Transverse colon (tissue), 4 donors: ENCODE measurements at regions of chr1 and their contacts with region 1.

Region 1: GRCh38 chr1:109532365-109533136 is 7.1 kb upstream of the GPR61 start:
- DNase-seq: peak; percentile 89
- H3K4me3 ChIP-seq: peak overlapping the region in 1 of 4 donors; percentile 20
- H3K27ac ChIP-seq: peak overlapping the region in 3 of 4 donors; percentile 21 to 58 (median 34)
- H3K4me1 ChIP-seq: peaks cover 4 to 25% (median 7%) of the 10 kb centered on the region in 4 donors
- H3K27me3 ChIP-seq: no peaks in the 10 kb centered on the region
- CTCF ChIP-seq: peak; percentile 97 to 99 (median 99)
- EP300 ChIP-seq: no peak
- POLR2A ChIP-seq: no peak

Region 2: GRCh38 chr1:109263597-109264398 is 268.8 kb before region 1 on chr1:
- in situ Hi-C with region 1: loop called in 2 of 4 experiments (anchors 5 to 10 kb)
- intact Hi-C with region 1: no loop called
- DNase-seq: peak; percentile 82
- H3K4me3 ChIP-seq: no peak overlapping the region
- H3K27ac ChIP-seq: no peak overlapping the region
- H3K4me1 ChIP-seq: no peaks in the 10 kb centered on the region
- H3K27me3 ChIP-seq: no peaks in the 10 kb centered on the region
- CTCF ChIP-seq: peak; percentile 91 to 100 (median 96)
- EP300 ChIP-seq: no peak
- POLR2A ChIP-seq: no peak

Region 3: GRCh38 chr1:109397538-109398342 is 134.8 kb before region 1 on chr1 and contains the start of gene SORT1:
- in situ Hi-C with region 1: no loop called
- intact Hi-C with region 1: no loop called
- DNase-seq: peak; percentile 85
- H3K4me3 ChIP-seq: peak within 1 kb of the TSS; percentile 29 to 82 (median 74)
- H3K27ac ChIP-seq: peak within 1 kb of the TSS; percentile 85 to 89 (median 86)
- H3K4me1 ChIP-seq: peaks cover 17 to 54% (median 44%) of the 10 kb centered on the region in 4 donors
- H3K27me3 ChIP-seq: no peaks in the 10 kb centered on the region
- CTCF ChIP-seq: no peak
- EP300 ChIP-seq: no peak
- POLR2A ChIP-seq: peak; percentile 14
- total RNA-seq, gene SORT1: 53.5 to 79.3 (median 66.2) TPM

Region 4: GRCh38 chr1:109485001-109485400 is 47.5 kb before region 1 on chr1:
- in situ Hi-C with region 1: loop called in 1 of 4 experiments (anchors 5 kb)
- intact Hi-C with region 1: no loop called
- DNase-seq: no peak
- H3K4me3 ChIP-seq: no peak overlapping the region
- H3K27ac ChIP-seq: no peak overlapping the region
- H3K4me1 ChIP-seq: peaks cover 8 to 20% (median 13%) of the 10 kb centered on the region in 4 donors
- H3K27me3 ChIP-seq: no peaks in the 10 kb centered on the region
- CTCF ChIP-seq: no peak
- EP300 ChIP-seq: no peak
- POLR2A ChIP-seq: no peak

Region 5: DNA sequence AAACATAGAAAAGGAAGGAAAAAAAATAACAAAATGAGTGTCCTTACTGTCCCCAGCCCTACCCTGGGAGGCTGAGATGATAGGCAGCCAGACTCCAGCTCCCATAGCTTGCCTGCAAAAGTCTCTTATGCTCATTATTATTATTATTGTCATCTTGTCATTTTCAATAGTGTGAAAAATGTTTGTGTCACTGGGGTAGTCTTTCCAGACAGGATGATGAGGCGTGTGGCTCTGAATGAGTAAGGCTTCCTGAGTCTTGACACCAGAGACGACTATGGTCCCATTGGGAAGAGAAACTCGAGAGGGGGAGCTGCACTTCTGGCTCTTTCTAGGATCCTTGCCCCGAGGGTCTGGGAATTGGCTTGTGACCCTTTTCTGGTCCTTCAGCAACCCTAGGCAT is 39.8 kb before region 1 on chr1:
- in situ Hi-C with region 1: loop called in 3 of 4 experiments (anchors 5 kb)
- intact Hi-C with region 1: loop called (anchors 1 kb)
- DNase-seq: no peak
- H3K4me3 ChIP-seq: no peak overlapping the region
- H3K27ac ChIP-seq: no peak overlapping the region
- H3K4me1 ChIP-seq: peaks cover 6 to 21% (median 14%) of the 10 kb centered on the region in 4 donors
- H3K27me3 ChIP-seq: no peaks in the 10 kb centered on the region
- CTCF ChIP-seq: no peak
- EP300 ChIP-seq: no peak
- POLR2A ChIP-seq: no peak

Region 6: DNA sequence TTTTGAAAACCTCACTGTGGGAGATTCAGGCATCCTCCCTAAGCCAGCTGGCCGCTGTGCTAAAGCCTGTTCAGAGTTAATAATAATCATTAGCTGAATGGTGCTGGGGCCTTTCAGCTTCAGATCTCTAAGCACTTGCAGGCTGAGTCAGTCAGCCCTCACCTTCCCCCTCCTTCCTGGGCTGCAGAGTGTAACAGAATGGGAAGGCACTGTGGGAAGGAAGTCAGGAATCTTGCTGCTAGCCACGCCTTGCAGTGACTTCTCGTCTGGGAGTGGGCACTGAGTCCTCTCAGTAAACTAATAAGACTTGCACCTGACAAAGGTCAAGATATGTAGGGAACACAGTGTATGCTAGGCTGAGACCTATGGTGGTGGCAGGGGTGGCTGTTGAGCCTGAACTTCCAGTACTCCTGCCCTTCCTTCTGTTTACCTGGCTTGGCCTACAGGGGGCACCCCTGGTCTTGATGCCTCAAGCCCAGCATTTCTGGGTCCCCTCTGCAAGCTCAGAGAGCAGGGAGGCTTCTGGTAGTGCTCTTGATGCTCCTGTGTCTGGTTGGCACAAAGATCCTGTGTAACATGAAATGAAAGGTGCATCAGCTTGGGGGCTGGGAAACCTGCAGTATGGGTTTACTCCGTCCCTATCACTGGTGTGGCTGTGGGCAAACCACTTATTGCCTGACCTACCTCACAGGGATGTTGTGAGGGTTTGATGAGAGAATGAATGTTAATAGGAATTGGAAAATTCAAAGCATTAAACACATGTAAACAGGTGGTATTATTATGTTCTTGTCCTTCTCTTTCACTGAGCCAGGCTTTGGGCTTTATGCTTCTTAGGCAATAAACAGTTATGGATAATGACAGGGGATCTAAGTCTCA is 32.7 kb before region 1 on chr1:
- in situ Hi-C with region 1: loop called in 2 of 4 experiments (anchors 5 kb)
- intact Hi-C with region 1: loop called (anchors 2 kb)
- DNase-seq: peak; percentile 83
- H3K4me3 ChIP-seq: no peak overlapping the region
- H3K27ac ChIP-seq: peak overlapping the region; percentile 31 to 64 (median 56)
- H3K4me1 ChIP-seq: peaks cover 20 to 49% (median 32%) of the 10 kb centered on the region in 4 donors
- H3K27me3 ChIP-seq: no peaks in the 10 kb centered on the region
- CTCF ChIP-seq: peak; percentile 49 to 74 (median 51)
- EP300 ChIP-seq: no peak
- POLR2A ChIP-seq: no peak

Region 7: DNA sequence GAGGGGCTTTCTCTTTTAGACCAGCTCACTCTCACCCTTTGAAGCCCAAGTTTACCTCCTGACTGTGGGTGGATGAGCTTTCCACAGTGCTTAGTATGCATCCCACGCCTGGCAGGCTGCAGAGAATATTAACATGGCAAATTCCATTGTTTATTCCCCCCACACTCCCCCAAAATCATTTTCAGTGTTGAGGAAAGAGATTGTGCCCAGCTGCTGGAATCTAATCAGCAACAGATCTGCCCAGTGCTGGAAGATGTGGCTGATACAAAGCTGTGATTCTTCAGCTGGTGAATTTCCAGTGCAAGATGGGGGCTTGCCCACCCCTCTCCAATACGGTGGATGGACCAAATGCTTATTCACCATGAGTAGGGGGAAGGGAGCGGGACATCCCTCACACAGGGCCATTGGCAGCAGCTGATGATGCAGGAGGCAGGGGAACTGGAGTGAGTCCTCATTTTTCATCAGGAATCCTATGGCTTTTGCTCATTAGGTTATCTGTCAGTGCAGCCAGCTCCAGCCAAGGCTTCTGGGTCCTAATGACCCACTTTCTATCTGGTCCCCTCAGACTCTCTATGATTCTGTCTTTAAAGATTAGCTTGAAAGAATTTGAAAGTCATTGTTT is 1181.9 kb after region 1 on chr1:
- in situ Hi-C with region 1: no loop called
- intact Hi-C with region 1: no loop called
- DNase-seq: no peak
- H3K4me3 ChIP-seq: no peak overlapping the region
- H3K27ac ChIP-seq: no peak overlapping the region
- H3K4me1 ChIP-seq: no peaks in the 10 kb centered on the region
- H3K27me3 ChIP-seq: no peaks in the 10 kb centered on the region
- CTCF ChIP-seq: no peak
- EP300 ChIP-seq: no peak
- POLR2A ChIP-seq: no peak